ENCODE measurements at regions of chr14 and their contacts with region 1.

Region 1: DNA sequence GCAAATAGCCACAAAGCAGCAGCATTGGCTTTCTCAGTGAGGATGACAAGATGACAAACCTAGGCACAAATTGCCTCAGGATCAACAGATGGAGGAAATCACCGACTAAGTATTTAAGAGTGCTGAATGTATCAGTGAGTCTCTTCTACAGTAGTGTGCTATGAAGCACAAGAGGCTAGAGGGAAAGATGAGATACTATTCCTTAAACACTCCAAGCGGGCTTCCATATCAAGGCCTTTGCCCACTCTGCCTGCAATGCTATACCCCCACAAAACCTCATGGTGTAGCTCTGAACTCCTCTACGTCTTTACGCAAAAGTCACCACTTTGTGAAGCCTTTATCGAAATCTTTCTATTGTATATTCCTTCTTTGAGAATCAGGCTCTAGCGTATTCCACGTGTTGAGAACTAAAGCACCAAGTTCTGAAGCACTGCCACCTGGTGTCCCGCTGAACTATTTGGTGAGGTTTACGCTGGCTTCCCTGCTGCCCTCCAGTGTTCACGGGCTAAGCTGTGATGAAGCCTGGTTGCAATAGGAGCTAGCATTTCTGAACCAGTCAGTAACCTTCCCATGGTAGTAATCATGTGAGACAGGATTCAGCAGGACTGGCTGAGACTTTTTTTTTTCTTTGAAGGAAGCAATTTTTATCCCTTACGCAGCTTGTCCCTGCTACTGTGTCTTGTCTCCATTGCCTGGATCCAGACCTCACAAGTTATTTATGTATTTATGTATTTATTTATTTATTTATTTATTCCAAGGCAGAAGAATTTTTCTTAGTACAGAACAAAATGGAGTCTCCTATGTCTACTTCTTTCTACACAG is 426.5 kb upstream of the OR4E1 start:
- DNase-seq: peak; percentile 78 to 80
- H3K4me3 ChIP-seq: no peak overlapping the region
- H3K4me3 Mint-ChIP-seq: no peak overlapping the region
- H3K27ac Mint-ChIP-seq: no peak overlapping the region
- H3K4me1 ChIP-seq: no peaks in the 10 kb centered on the region
- H3K4me1 Mint-ChIP-seq: no peaks in the 10 kb centered on the region
- H3K27me3 ChIP-seq: no peaks in the 10 kb centered on the region; the same call in 1 of the 2 replicates
- H3K27me3 Mint-ChIP-seq: peaks cover 2% of the 10 kb centered on the region
- CTCF ChIP-seq: peak; percentile 62 to 95

Region 2: DNA sequence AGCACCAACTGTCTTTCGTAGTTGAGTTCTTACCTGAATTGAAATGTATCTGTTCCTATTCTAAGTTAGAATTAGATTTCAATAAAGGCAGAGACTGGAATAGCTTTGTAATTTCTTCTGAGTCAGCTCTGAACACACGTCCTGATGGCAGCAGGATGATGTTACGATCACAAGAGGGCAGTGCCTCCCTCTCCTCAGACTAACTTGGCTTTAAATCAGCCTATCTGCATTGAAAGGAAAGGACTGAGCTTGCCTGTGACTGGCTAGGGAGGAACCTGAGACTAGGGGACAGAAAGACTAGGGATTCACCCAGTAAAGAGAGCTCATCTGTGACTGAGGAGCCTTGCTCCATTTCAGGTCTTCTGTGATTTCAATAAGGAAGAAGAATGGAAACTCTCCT is 102.9 kb before region 1 on chr14:
- CTCF ChIA-PET with region 1: interaction called, 18 read pairs
- POLR2A ChIA-PET with region 1: no interaction called
- intact Hi-C with region 1: loop called (anchors 2 kb)
- DNase-seq: peak in 1 of 2 experiments; percentile 10
- H3K4me3 ChIP-seq: no peak overlapping the region
- H3K4me3 Mint-ChIP-seq: no peak overlapping the region
- H3K27ac Mint-ChIP-seq: no peak overlapping the region
- H3K4me1 ChIP-seq: no peaks in the 10 kb centered on the region
- H3K4me1 Mint-ChIP-seq: peaks cover 4% of the 10 kb centered on the region
- H3K27me3 ChIP-seq: no peaks in the 10 kb centered on the region
- H3K27me3 Mint-ChIP-seq: peaks cover 7% of the 10 kb centered on the region
- CTCF ChIP-seq: peak; percentile 15 to 56

Region 3: DNA sequence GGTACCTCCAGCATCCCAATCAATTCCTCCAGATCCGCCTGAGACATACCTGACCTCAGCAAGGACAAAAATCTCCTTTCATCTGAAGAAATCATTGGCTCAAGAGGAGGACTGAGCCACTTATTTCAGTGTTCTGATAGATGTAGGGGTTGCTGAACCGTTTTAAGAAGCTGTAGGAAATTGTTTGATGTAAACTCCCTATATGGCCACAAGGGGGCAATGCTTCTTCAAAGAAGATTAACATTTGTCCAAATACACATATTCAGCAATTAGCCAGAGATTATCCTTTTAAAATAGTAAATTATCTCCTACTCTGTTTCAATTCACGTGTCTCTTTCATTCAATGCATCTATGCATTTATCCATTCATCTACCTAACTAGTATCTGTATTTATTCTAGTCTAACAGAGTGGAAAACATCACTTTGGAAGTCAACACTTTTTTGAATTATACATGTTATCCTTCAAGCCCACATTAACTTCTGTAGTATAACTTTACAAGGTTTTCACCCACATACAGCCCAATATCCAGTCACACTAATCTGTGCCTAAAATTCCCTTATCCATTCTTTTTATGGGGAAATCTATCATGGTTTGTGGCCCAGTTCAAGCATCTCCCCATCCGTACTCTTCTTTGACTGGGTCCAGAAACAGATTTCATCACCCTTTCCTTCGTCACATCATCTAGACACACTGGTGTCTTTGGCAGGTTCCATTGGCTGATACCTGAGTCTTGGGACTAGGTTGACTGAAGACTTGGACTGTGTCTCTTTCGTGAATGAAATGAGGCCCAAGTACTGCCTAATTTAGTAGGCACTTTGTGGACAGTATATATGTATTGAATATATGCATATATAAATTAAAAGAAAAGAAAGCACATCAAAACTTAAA is 15.5 kb before region 1 on chr14:
- CTCF ChIA-PET with region 1: interaction called, 27 read pairs
- POLR2A ChIA-PET with region 1: no interaction called
- intact Hi-C with region 1: loop called (anchors 1 kb)
- DNase-seq: peak in 1 of 2 experiments; percentile 36
- H3K4me3 ChIP-seq: no peak overlapping the region
- H3K4me3 Mint-ChIP-seq: no peak overlapping the region
- H3K27ac Mint-ChIP-seq: no peak overlapping the region
- H3K4me1 ChIP-seq: no peaks in the 10 kb centered on the region
- H3K4me1 Mint-ChIP-seq: no peaks in the 10 kb centered on the region
- H3K27me3 ChIP-seq: no peaks in the 10 kb centered on the region
- H3K27me3 Mint-ChIP-seq: peaks cover 7% of the 10 kb centered on the region
- CTCF ChIP-seq: peak; percentile 56 to 62

Region 4: GRCh38 chr14:22131749-22132476 is 31.8 kb after region 1 on chr14:
- CTCF ChIA-PET with region 1: no interaction called
- POLR2A ChIA-PET with region 1: no interaction called
- intact Hi-C with region 1: no loop called
- DNase-seq: peak in 1 of 2 experiments; percentile 37
- H3K4me3 ChIP-seq: no peak overlapping the region
- H3K4me3 Mint-ChIP-seq: no peak overlapping the region
- H3K27ac Mint-ChIP-seq: no peak overlapping the region
- H3K4me1 ChIP-seq: no peaks in the 10 kb centered on the region
- H3K4me1 Mint-ChIP-seq: no peaks in the 10 kb centered on the region
- H3K27me3 ChIP-seq: no peaks in the 10 kb centered on the region
- H3K27me3 Mint-ChIP-seq: peaks cover 11% of the 10 kb centered on the region
- CTCF ChIP-seq: peak; percentile 44 to 51